ENCODE measurements at regions of chr5 and their contacts with region 1.

Region 1: GRCh38 chr5:134637161-134637582 is 4.5 kb upstream of the SAR1B start:
- DNase-seq: no peak
- H3K4me3 Mint-ChIP-seq: no peak overlapping the region
- H3K27ac Mint-ChIP-seq: no peak overlapping the region
- H3K4me1 Mint-ChIP-seq: peaks cover 7% of the 10 kb centered on the region
- H3K27me3 Mint-ChIP-seq: no peaks in the 10 kb centered on the region

Region 2: DNA sequence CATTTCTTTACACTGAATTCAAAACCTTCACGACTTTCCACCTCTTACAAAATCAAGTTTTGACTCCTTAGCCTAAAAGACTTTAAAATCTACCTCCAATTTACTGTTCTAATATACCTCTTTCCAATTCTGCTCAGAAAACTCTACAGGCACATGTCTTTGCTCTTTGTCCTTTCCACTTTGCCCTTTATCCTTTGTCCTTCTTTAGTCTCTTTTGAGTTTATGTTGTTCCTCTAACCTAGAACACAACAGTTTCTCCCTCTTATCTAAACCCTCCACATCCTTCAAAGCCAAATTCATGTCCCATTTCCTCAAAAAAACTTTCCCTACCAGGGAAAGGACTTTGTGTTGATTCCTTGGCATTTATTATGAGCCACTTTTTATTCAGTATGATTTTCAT is 271.6 kb before region 1 on chr5:
- intact Hi-C with region 1: loop called (anchors 5 kb)
- DNase-seq: no peak
- H3K4me3 Mint-ChIP-seq: peak overlapping the region; percentile 0
- H3K27ac Mint-ChIP-seq: peak overlapping the region; percentile 2
- H3K4me1 Mint-ChIP-seq: peaks cover 31% of the 10 kb centered on the region
- H3K27me3 Mint-ChIP-seq: no peaks in the 10 kb centered on the region

Region 3: DNA sequence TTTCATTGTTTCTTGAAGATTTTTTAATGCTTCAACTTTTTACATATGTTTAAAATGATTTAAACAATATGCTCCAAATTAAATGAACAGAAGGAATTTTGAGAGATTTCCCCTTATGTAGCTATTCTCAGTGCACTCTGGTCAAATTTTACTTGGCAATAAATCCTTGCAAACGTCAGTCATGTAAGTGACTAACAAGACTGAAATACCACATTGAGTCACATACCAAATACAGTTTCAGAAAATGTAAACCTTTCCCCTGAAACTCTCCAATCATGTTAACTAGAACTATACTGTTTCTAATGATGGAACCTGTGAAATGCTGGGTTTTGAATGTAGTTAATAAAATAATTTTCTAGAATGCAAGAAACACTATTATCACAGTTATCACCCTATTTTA is 34.1 kb before region 1 on chr5:
- intact Hi-C with region 1: loop called (anchors 1 kb)
- DNase-seq: no peak
- H3K4me3 Mint-ChIP-seq: peak overlapping the region; percentile 6
- H3K27ac Mint-ChIP-seq: peak overlapping the region; percentile 36
- H3K4me1 Mint-ChIP-seq: peaks cover 44% of the 10 kb centered on the region
- H3K27me3 Mint-ChIP-seq: no peaks in the 10 kb centered on the region